Activated B cell treated with CpG ODN at 0.5 μM for 24 hours (primary cell): ENCODE measurements at regions of chr11 and their contacts with region 1.

Region 1: GRCh38 chr11:14454861-14455632 is 44.6 kb downstream of the COPB1 start:
- DNase-seq: no peak
- ATAC-seq: no peak
- H3K4me3 Mint-ChIP-seq: no peak overlapping the region
- H3K27ac Mint-ChIP-seq: no peak overlapping the region
- H3K4me1 Mint-ChIP-seq: peaks cover 22% of the 10 kb centered on the region
- H3K27me3 Mint-ChIP-seq: no peaks in the 10 kb centered on the region
- CTCF ChIP-seq: peak; percentile 43

Region 2: GRCh38 chr11:13955971-13956421 is 499.1 kb before region 1 on chr11:
- CTCF ChIA-PET with region 1: interaction called, 7 read pairs
- POLR2A ChIA-PET with region 1: no interaction called
- intact Hi-C with region 1: loop called (anchors 2 kb)
- DNase-seq: no peak
- ATAC-seq: peak; percentile 65
- H3K4me3 Mint-ChIP-seq: no peak overlapping the region
- H3K27ac Mint-ChIP-seq: no peak overlapping the region
- H3K4me1 Mint-ChIP-seq: no peaks in the 10 kb centered on the region
- H3K27me3 Mint-ChIP-seq: peaks cover 25% of the 10 kb centered on the region
- CTCF ChIP-seq: peak; percentile 16

Region 3: GRCh38 chr11:14288189-14288935 is 166.7 kb before region 1 on chr11:
- CTCF ChIA-PET with region 1: interaction called, 21 read pairs
- POLR2A ChIA-PET with region 1: interaction called, 9 read pairs
- intact Hi-C with region 1: no loop called
- DNase-seq: no peak
- ATAC-seq: no peak
- H3K4me3 Mint-ChIP-seq: no peak overlapping the region
- H3K27ac Mint-ChIP-seq: peak overlapping the region; percentile 57
- H3K4me1 Mint-ChIP-seq: peaks cover 18% of the 10 kb centered on the region
- H3K27me3 Mint-ChIP-seq: no peaks in the 10 kb centered on the region
- CTCF ChIP-seq: no peak

Region 4: GRCh38 chr11:14308114-14308896 is 146.7 kb before region 1 on chr11:
- CTCF ChIA-PET with region 1: interaction called, 245 read pairs
- POLR2A ChIA-PET with region 1: interaction called, 21 read pairs
- intact Hi-C with region 1: loop called (anchors 2 kb)
- DNase-seq: no peak
- ATAC-seq: peak; percentile 51
- H3K4me3 Mint-ChIP-seq: no peak overlapping the region
- H3K27ac Mint-ChIP-seq: no peak overlapping the region
- H3K4me1 Mint-ChIP-seq: peaks cover 43% of the 10 kb centered on the region
- H3K27me3 Mint-ChIP-seq: no peaks in the 10 kb centered on the region
- CTCF ChIP-seq: peak; percentile 58

Region 5: GRCh38 chr11:14380947-14381561 is 74.0 kb before region 1 on chr11:
- CTCF ChIA-PET with region 1: interaction called, 4 read pairs
- POLR2A ChIA-PET with region 1: no interaction called
- intact Hi-C with region 1: loop called (anchors 1 kb)
- DNase-seq: peak; percentile 64
- ATAC-seq: peak; percentile 96
- H3K4me3 Mint-ChIP-seq: peak overlapping the region; percentile 83
- H3K27ac Mint-ChIP-seq: peak overlapping the region; percentile 81
- H3K4me1 Mint-ChIP-seq: peaks cover 14% of the 10 kb centered on the region
- H3K27me3 Mint-ChIP-seq: no peaks in the 10 kb centered on the region
- CTCF ChIP-seq: no peak

Region 6: DNA sequence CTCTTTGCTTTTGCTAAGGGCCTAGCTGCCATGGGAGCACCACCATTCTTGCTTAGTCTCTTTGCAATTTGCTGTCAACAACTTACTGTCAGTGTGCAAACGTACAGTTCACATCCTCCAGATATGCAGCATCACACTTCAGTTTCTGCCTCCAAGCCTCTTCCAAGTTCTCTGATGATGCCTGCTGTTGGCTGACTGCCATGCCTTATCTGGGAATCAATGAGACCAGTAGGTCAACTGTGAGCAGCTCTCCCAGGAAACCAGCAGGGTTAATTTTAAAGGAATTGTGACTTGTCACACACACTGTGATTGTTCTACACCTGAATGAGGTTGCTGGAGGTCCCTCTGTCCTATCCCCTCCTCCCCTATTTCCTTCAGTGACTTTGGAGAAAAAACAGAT is 11.4 kb before region 1 on chr11:
- CTCF ChIA-PET with region 1: interaction called, 3 read pairs
- POLR2A ChIA-PET with region 1: interaction called, 10 read pairs
- intact Hi-C with region 1: no loop called
- DNase-seq: no peak
- ATAC-seq: no peak
- H3K4me3 Mint-ChIP-seq: no peak overlapping the region
- H3K27ac Mint-ChIP-seq: no peak overlapping the region
- H3K4me1 Mint-ChIP-seq: peaks cover 30% of the 10 kb centered on the region
- H3K27me3 Mint-ChIP-seq: no peaks in the 10 kb centered on the region
- CTCF ChIP-seq: no peak

Region 7: GRCh38 chr11:14499554-14500180 is 44.6 kb after region 1 on chr11 and contains the start of gene COPB1:
- CTCF ChIA-PET with region 1: interaction called, 6 read pairs
- POLR2A ChIA-PET with region 1: no interaction called
- intact Hi-C with region 1: loop called (anchors 5 kb)
- DNase-seq: peak; percentile 81
- ATAC-seq: peak; percentile 95
- H3K4me3 Mint-ChIP-seq: peak within 1 kb of the TSS; percentile 100
- H3K27ac Mint-ChIP-seq: peak within 1 kb of the TSS; percentile 96
- H3K4me1 Mint-ChIP-seq: peaks cover 41% of the 10 kb centered on the region
- H3K27me3 Mint-ChIP-seq: no peaks in the 10 kb centered on the region
- CTCF ChIP-seq: no peak
- total RNA-seq, gene COPB1: 80.7 and 90.1 TPM in 2 replicates